ENCODE measurements at regions of chr11 and their contacts with region 1.

Region 1: GRCh38 chr11:7793233-7793632 is 3.5 kb downstream of the OR5P2 start:
- DNase-seq: no peak
- H3K4me3 ChIP-seq: no peak overlapping the region
- H3K27ac ChIP-seq: no peak overlapping the region
- H3K4me1 ChIP-seq: no peaks in the 10 kb centered on the region
- H3K27me3 ChIP-seq: no peaks in the 10 kb centered on the region
- CTCF ChIP-seq: no peak
- POLR2A ChIP-seq: no peak

Region 2: GRCh38 chr11:7833527-7833926 is 40.3 kb after region 1 on chr11:
- intact Hi-C with region 1: loop called (anchors 2 kb)
- DNase-seq: no peak
- H3K4me3 ChIP-seq: no peak overlapping the region
- H3K27ac ChIP-seq: no peak overlapping the region
- H3K4me1 ChIP-seq: no peaks in the 10 kb centered on the region
- H3K27me3 ChIP-seq: no peaks in the 10 kb centered on the region
- CTCF ChIP-seq: no peak
- POLR2A ChIP-seq: no peak

Region 3: DNA sequence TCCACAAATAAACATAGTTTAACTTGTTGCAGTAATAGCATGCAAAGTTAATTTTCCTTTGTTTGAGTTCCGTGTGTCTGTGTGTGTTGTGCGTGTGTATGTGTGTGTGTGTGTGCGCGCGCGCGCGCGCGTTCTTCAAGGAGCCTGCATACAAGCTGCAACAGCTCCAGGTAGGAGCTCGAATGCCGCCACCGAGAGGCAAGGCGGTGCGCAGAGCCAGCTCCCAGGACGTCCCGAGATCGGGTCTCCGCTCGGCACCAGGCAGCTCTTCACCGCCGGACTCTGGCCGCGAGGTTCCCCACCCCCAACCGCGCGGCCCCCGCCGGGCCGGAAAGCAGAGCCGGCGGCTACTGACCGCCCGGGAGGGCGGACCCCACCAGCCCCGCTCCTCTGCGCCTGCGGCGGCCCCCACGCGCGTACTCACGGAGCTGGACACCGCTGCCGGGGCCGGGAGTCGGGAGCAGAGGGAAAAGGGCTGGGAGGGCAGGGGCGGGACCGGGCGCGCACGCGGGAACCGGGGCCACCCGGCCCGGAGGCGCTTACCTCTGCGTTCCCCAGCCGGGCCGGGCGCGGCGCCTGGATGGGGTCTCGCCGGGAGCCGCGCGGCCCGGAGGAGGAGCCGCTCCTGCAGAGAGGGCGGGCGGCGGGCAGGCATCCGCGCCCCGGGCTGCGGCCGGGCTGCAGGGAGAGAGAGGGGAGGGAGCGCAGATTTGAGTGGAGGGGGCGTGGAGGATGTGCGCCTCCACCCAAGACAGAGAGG is 1077.4 kb after region 1 on chr11:
- intact Hi-C with region 1: no loop called
- DNase-seq: peak in 1 of 2 donors; percentile 59
- H3K4me3 ChIP-seq: peak overlapping the region; percentile 72 to 94 (median 76)
- H3K27ac ChIP-seq: peak overlapping the region; percentile 87 to 96
- H3K4me1 ChIP-seq: peaks cover 0 to 7% of the 10 kb centered on the region in 2 donors
- H3K27me3 ChIP-seq: no peaks in the 10 kb centered on the region
- CTCF ChIP-seq: no peak
- POLR2A ChIP-seq: no peak

Measured in breast epithelium (tissue), 4 donors.